Activated T-helper 1 cell treated with anti-CD3 and anti-CD28 coated beads, Interleukin-12 subunit alpha, Interleukin-12 subunit beta, Interleukin-2, Interleukin-4 antibody, amounts not matched to agents 30 ng/mL and 10 ng/mL and 1 ng/mL, durations not matched to agents 14 hours and 24 hours and 36 hours (primary cell): ENCODE measurements at regions of chr7 and their contacts with region 1.

Region 1: DNA sequence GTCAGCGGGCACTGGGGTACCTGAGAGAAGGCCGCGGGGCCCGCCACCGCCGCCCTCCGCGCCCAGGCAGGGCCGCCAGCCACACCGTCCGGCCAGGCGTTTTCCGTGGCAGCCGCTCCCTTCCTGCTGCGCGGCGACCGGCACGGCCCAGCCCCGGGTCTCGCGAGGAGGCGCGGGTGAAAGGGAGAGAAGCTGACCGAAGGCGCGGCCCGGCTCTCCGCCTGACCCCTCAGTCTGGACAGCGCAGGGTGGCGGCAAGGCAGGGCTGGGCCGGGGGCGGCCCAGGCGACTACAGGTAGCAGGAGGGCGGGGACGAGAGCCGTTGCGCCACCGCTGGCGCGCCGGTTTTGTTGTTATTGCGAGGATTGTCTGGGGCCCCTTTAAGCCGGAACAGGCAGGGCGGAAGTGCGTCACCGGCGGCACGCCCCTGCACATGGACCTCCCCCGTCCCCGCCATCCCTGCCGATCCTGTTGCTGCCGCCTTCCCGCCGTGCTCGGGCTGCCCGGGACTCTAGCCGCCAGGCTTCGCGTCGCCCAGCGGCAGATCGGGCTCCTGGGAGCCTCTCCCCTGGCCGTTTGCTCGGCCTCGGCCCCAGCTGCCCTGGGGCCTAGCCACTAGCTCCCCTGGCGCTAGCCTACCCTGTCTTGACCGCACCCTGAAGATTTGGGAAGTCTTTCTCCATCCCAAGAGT is at the start of gene HERPUD2:
- DNase-seq: peak; percentile 88
- H3K4me3 Mint-ChIP-seq: peak within 1 kb of the TSS; percentile 99
- H3K27ac Mint-ChIP-seq: peak within 1 kb of the TSS; percentile 98
- H3K4me1 Mint-ChIP-seq: peaks cover 71% of the 10 kb centered on the region
- H3K27me3 Mint-ChIP-seq: no peaks in the 10 kb centered on the region
- total RNA-seq, gene HERPUD2: 24.7 and 24.8 TPM in 2 replicates

Region 2: DNA sequence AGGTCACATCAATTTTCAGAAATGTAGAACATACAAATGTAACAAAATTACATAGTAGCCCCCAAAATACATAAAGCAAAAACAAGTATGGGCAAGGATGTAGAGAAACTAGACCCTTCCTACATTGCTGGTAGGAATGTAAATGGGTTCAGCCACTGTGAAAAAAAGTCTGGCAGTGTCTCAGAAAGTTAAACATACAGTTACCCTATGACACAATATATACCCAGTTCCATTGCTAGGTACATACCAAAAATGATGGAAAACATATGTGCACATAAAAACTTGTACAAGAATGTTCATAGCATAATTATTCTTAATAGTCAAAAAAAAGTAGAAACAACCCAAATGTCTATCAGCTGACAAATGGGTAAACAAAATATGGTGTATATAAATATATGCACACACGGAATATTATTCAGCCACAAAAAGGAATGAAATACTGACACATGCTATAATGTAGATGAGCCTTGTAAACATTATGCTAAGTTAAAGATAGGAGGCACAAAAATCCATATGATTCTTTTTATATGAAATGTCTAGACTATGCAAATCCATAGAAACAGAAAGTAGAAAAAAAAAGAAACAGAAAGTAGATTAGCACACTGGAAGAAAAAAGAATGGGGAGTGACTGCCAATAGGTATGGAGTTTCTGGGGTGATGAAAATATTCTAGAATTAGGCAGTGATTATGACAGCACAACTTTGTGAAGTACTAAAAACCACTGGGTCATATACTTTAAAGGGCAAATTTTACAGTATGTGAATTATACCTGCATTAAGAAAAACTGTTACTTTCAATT is 13.5 kb before region 1 on chr7:
- intact Hi-C with region 1: loop called (anchors 1 kb)
- DNase-seq: no peak
- H3K4me3 Mint-ChIP-seq: peak overlapping the region; percentile 10
- H3K27ac Mint-ChIP-seq: peak overlapping the region; percentile 31
- H3K4me1 Mint-ChIP-seq: peaks cover 57% of the 10 kb centered on the region
- H3K27me3 Mint-ChIP-seq: no peaks in the 10 kb centered on the region

Region 3: DNA sequence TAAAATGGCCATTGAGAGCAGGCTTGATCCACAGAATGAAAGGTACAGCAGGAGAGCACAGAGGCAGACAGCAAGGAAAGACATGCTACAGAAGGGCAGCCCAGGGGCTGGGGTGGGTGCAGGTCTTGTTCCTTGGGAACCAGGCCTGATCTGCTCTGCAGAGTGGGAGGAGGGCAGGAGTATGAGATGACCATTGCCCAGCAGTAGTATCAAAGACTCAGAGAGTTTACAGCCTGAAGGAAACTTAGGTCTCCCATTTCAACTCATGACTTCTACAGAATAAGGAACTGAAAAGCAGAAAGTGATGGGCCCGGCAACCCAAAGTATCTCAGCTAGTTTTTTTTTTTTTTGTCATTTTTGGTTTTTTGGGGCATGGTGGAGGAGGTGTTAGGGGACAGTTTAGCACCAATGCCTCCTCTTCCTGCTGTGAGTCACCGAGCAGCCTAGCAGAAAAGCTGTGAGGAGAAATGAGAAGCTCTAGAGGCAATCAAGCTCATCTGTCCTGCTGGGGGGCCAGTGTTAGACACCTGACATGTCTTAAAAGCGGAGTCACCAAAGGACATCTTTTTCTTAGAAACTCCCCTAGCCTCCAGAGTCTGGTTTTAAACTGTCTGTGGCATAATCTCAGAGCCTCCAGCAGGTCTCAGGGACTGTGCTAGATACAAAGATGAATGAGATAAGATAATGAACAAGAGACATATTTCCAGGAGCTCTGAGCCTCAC is 34.3 kb after region 1 on chr7:
- intact Hi-C with region 1: loop called (anchors 1 kb)
- DNase-seq: peak; percentile 19
- H3K4me3 Mint-ChIP-seq: peak overlapping the region; percentile 26
- H3K27ac Mint-ChIP-seq: peak overlapping the region; percentile 55
- H3K4me1 Mint-ChIP-seq: peaks cover 69% of the 10 kb centered on the region
- H3K27me3 Mint-ChIP-seq: peaks cover 6% of the 10 kb centered on the region

Region 4: DNA sequence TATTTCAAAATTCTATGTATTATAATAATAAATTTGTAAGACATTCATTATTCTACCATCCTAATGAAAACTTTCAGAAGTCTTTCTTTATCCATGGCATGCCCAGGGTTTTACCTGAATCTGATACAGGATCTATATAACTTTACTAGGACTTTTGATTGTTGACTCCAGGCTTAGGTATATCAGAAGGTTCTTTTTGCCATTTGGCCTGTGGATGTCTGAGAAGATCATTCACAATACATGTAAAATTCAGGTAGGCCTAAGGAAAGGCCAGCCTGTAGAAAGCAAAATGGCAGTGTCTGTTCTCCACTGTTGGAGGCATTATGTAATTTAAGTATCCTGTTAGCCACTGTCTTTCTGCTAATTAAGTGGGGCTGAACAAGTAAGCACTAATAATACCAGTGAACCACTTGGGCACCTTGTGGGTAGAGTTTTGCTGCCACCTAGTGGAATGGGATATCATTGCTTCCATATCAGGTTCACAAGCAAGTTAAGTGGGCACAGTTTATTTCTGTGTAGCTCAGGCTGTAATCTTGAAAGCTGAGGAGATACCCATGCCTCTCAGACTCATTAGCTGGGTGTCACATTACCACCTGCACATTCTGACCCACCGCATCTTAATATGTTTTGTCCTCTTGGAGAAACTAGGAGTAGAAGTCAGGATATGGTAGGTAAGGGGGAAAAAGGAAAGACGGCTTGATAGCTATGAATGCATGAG is 211.4 kb after region 1 on chr7:
- intact Hi-C with region 1: loop called (anchors 1 kb)
- DNase-seq: peak; percentile 43
- H3K4me3 Mint-ChIP-seq: no peak overlapping the region
- H3K27ac Mint-ChIP-seq: no peak overlapping the region
- H3K4me1 Mint-ChIP-seq: peaks cover 6% of the 10 kb centered on the region
- H3K27me3 Mint-ChIP-seq: no peaks in the 10 kb centered on the region

Region 5: DNA sequence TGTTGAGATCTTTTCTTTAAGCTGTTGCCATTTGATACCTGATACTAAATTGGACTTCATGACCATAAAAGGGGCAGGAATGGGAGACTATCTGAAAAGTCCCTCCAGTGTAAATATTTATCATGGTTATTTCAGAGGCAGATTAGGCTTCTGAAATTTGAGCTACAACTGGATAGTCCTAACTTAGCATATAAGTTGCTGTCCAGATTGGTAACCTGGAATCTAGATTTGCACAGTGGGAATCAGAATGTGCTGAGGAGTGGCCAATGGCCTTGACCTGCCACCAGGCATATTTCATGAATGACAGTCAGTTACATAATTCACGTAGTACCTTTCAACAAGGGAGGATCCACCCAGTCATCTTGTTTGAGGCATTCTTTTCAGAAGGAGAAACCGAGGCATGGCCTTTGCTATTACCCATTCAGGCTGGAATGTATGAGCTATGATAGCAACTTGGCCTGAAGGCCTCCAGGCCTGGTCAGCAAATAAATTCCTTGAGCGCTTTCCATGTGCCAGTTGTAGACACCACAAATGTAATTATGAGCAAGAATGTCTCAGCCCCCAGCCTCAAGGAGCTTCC is 538.1 kb after region 1 on chr7:
- intact Hi-C with region 1: no loop called
- DNase-seq: no peak
- H3K4me3 Mint-ChIP-seq: no peak overlapping the region
- H3K27ac Mint-ChIP-seq: no peak overlapping the region
- H3K4me1 Mint-ChIP-seq: no peaks in the 10 kb centered on the region
- H3K27me3 Mint-ChIP-seq: peaks cover 1% of the 10 kb centered on the region

Region 6: GRCh38 chr7:36366718-36367560 is 672.0 kb after region 1 on chr7:
- intact Hi-C with region 1: loop called (anchors 1 kb)
- DNase-seq: peak; percentile 91
- H3K4me3 Mint-ChIP-seq: peak overlapping the region; percentile 91
- H3K27ac Mint-ChIP-seq: peak overlapping the region; percentile 67
- H3K4me1 Mint-ChIP-seq: no peaks in the 10 kb centered on the region
- H3K27me3 Mint-ChIP-seq: peaks cover 31% of the 10 kb centered on the region